ENCODE measurements at regions of chr5 and their contacts with region 1.

Region 1: GRCh38 chr5:139439013-139439903 is at the start of gene DNAJC18:
- DNase-seq: peak; percentile 93
- H3K4me3 Mint-ChIP-seq: peak within 1 kb of the TSS; percentile 94
- H3K27ac Mint-ChIP-seq: peak within 1 kb of the TSS; percentile 99
- H3K4me1 Mint-ChIP-seq: peaks cover 59% of the 10 kb centered on the region
- H3K27me3 Mint-ChIP-seq: no peaks in the 10 kb centered on the region
- total RNA-seq, gene DNAJC18: 4.5 to 6.8 TPM

Region 2: DNA sequence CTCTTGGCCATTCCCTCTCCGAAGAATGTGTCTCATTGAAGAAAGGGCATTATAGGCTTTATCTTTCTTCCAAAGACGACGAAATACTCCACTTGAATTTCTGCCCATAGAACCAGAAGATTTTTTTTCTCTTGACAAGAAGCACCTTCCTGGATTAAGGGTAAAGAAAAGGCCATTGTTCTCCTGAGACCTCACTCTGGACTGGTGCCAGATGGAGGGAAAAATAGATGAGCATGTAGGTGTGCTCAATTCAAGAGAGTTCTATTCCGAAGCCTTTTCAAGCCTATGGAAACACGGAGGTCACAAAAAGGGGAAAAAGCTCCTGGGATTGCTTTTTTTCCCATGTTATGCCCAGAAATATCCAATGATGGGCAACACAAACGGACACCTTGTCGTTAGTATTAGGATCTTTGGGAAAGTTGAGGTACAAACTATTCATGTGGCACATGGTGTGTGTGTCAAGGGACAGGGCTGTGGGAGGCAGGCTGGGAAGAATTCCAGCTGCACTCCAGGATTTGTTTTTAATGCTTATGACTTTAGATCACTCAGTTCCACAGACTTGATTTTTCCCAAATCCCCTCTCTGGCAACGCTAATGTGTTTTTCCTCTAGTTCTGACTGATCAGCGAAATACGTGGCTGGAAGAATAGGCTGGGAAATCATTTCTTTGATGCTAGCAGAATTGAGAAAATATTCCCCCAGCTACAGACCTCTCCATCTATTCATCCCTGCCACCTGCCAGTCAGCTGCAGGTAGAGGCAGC is 331.0 kb before region 1 on chr5:
- CTCF ChIA-PET with region 1: no interaction called
- POLR2A ChIA-PET with region 1: no interaction called
- DNase-seq: no peak
- H3K4me3 Mint-ChIP-seq: no peak overlapping the region
- H3K27ac Mint-ChIP-seq: no peak overlapping the region
- H3K4me1 Mint-ChIP-seq: no peaks in the 10 kb centered on the region
- H3K27me3 Mint-ChIP-seq: peaks cover 9% of the 10 kb centered on the region

Region 3: GRCh38 chr5:139410993-139411828 is 28.0 kb before region 1 on chr5:
- CTCF ChIA-PET with region 1: interaction called, 14 read pairs
- POLR2A ChIA-PET with region 1: no interaction called
- DNase-seq: no peak
- H3K4me3 Mint-ChIP-seq: no peak overlapping the region
- H3K27ac Mint-ChIP-seq: no peak overlapping the region
- H3K4me1 Mint-ChIP-seq: peaks cover 50% of the 10 kb centered on the region
- H3K27me3 Mint-ChIP-seq: no peaks in the 10 kb centered on the region

Region 4: DNA sequence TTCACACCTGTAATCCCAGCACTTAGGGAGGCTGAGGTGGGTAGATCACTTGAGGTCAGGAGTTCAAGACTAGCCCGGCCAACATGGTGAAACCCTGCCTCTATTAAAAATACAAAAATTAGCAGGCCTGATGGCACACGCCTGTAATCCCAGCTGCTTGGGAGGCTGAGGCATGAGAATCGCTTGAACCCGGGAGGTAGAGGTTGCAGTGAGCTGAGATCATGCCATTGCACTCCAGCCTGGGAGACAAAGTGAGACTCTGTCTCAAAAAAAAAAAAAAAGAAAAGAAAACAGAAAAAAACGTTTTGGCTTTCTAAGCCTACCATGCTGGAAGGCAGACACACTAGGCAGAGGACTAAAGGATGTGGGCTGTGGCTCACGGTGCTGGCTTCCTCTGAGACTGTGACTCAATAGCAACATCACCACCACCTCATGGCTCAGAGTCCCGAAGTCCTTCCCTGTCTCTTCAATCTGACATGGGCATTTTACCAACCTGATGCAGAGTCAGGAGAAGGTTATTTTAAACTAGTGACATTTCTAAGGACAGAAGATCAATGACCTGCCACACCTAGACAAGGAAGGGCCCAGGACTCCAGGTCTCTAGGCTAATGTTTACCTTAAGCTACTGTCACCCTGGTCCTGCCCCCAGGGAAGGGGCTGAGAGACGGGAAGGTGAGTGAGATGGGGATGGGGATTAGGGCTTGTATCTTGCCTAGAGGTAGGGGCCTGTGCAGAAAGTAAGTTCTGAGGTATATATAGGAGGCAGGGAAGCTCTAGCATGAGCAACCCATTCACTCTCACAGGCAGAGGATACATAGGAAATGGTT is 19.5 kb after region 1 on chr5:
- CTCF ChIA-PET with region 1: interaction called, 11 read pairs
- POLR2A ChIA-PET with region 1: no interaction called
- DNase-seq: peak; percentile 89
- H3K4me3 Mint-ChIP-seq: peak overlapping the region; percentile 58
- H3K27ac Mint-ChIP-seq: peak overlapping the region; percentile 92
- H3K4me1 Mint-ChIP-seq: peaks cover 71% of the 10 kb centered on the region
- H3K27me3 Mint-ChIP-seq: no peaks in the 10 kb centered on the region

Measured in activated CD4-positive, alpha-beta T cell treated with anti-CD3 and anti-CD28 coated beads, Interleukin-2, amount 10 ng/mL, durations not matched to agents 7 days and 5 days (primary cell).